ENCODE measurements at regions of chr19 and their contacts with region 1.

Region 1: DNA sequence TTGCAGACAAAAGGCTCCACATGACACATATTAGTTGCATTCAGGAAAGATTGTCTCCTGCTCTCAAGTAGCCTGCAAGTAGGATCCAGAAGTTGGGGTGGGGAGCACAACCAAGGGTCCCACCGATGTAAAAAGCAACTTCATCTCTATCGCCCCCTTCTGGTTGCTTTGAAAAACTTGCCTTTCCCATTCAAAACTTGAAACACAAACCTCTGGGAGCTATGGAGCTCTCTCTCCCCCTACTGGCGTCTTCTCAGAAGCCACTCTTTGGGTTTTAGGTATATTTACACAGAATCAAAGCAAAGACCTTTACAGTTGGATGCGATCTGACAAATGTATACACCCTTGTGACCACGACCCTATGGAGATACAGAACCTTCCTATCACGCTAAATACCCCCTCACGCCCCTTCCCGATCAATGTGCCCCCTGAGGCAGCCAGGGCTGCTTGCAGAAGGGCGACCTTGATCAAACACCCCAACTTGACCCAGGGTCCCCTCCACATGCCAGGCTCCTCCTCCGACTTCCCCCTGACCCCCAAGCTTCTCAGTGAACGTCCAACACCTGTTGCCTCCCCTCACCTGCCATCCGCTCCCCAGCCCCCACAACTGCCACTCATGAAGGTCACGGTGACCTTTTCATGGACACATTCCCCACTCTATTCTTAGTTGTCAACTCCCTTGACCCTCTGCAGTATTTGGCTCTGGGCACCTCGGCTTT is 10.1 kb downstream of the NOSIP start:
- DNase-seq: peak; percentile 81
- H3K4me3 Mint-ChIP-seq: peak overlapping the region; percentile 37
- H3K27ac Mint-ChIP-seq: peak overlapping the region; percentile 85
- H3K4me1 Mint-ChIP-seq: peaks cover 47% of the 10 kb centered on the region
- H3K27me3 Mint-ChIP-seq: no peaks in the 10 kb centered on the region

Region 2: DNA sequence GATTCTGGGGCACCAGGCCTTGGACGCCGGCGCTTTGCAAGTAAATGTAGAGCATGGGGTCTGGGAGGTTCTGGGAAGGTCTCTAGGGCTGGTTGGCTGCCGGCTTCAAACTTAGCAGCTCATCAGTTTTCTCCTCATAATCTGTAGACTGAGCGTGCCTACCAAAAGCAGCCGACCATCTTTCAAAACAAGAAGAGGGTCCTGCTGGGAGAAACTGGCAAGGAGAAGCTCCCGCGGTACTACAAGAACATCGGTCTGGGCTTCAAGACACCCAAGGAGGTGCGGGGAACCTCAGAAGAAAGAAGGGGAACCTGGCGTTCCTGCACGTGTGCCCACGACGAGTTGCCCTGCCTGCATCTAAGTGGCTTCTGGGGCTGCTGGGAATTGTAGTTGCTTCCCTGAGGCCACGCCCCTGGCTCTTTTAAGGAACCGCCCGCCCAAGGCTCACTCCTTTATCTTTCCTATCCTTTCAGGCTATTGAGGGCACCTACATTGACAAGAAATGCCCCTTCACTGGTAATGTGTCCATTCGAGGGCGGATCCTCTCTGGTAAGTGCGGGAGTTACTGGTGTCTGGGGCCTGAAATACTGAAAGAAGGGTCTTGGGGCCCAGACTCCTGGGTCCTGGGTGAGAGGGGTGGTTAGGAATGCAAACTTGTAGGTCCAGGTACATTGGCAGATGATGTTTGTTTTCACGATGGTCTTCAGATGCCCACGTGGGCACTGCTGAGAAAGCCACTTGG is 73.1 kb before region 1 on chr19:
- CTCF ChIA-PET with region 1: interaction called, 202 read pairs
- POLR2A ChIA-PET with region 1: interaction called, 4 read pairs
- intact Hi-C with region 1: no loop called
- DNase-seq: peak; percentile 83
- H3K4me3 Mint-ChIP-seq: peak overlapping the region; percentile 92
- H3K27ac Mint-ChIP-seq: peak overlapping the region; percentile 97
- H3K4me1 Mint-ChIP-seq: peaks cover 49% of the 10 kb centered on the region
- H3K27me3 Mint-ChIP-seq: no peaks in the 10 kb centered on the region

Region 3: GRCh38 chr19:49528211-49528771 is 42.0 kb before region 1 on chr19:
- CTCF ChIA-PET with region 1: interaction called, 30 read pairs
- POLR2A ChIA-PET with region 1: interaction called, 3 read pairs
- intact Hi-C with region 1: no loop called
- DNase-seq: no peak
- H3K4me3 Mint-ChIP-seq: peak overlapping the region; percentile 72
- H3K27ac Mint-ChIP-seq: no peak overlapping the region
- H3K4me1 Mint-ChIP-seq: peaks cover 18% of the 10 kb centered on the region
- H3K27me3 Mint-ChIP-seq: no peaks in the 10 kb centered on the region

Region 4: GRCh38 chr19:49546825-49547565 is 23.3 kb before region 1 on chr19:
- CTCF ChIA-PET with region 1: interaction called, 171 read pairs
- POLR2A ChIA-PET with region 1: interaction called, 5 read pairs
- intact Hi-C with region 1: no loop called
- DNase-seq: peak; percentile 68
- H3K4me3 Mint-ChIP-seq: peak overlapping the region; percentile 75
- H3K27ac Mint-ChIP-seq: peak overlapping the region; percentile 59
- H3K4me1 Mint-ChIP-seq: peaks cover 29% of the 10 kb centered on the region
- H3K27me3 Mint-ChIP-seq: no peaks in the 10 kb centered on the region

Region 5: DNA sequence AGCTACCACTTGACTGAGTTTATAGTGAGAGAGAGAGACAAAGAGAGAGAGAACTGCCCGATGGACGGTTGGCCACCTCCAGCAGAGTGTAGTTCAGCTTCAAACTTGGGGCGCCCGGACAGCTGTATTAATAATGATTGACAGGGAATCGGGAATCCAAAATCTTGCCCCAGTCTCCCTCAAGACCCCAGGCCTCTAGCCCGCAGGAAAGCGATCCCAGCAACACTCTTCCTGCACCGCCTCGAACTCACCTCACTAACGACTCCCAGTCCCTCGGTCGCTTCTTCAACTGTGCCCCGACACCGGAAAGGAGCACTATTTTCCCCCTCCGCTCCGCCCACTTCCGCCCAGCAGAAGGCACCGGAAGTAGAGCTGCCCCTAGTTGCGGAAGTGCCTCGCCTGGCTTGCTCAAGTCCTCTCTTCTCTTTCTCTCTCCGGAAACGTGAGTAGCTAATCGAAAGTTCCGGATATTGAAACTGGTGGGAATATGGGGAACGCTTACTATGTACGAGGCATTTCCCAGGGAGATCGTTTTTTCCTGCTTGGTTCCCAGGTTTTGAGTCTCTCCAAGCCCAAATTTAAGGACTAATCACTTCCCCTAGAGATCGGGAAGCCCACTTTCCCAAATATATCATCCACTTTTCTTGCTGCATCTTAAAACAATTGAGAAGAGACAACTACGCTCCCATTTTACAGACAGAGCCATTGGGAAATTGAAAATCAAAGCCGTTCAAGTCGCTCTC is 10.1 kb after region 1 on chr19 and contains the start of gene NOSIP:
- CTCF ChIA-PET with region 1: interaction called, 36 read pairs
- POLR2A ChIA-PET with region 1: interaction called, 8 read pairs
- intact Hi-C with region 1: no loop called
- DNase-seq: peak; percentile 98
- H3K4me3 Mint-ChIP-seq: peak within 1 kb of the TSS; percentile 97
- H3K27ac Mint-ChIP-seq: peak within 1 kb of the TSS; percentile 92
- H3K4me1 Mint-ChIP-seq: peaks cover 29% of the 10 kb centered on the region
- H3K27me3 Mint-ChIP-seq: no peaks in the 10 kb centered on the region
- total RNA-seq, gene NOSIP: 80.3 to 84.3 TPM

Region 6: DNA sequence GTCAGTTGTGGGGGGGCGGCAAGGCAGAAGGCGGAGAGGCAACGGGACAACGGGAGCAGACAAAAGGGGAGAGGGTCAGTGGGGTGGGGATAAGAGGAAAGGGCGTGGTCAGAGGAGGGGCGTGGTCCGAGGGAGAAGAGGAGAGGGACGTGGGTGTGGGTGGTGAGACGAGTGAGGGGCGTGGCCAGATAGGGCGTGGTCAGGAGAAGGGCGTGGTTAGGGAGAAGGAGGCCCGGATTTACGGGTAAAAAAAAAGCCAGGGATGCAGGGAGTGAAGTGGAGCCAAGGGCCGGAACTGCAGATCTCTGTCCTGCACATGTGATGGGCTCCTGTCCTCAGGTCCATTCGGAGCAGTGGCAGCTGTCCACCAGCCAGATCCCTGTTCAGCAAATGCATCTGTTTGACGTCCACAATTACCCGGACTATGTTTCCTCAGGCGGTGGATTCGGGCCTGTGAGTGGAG is 142.1 kb after region 1 on chr19:
- CTCF ChIA-PET with region 1: no interaction called
- POLR2A ChIA-PET with region 1: no interaction called
- intact Hi-C with region 1: no loop called
- DNase-seq: no peak
- H3K4me3 Mint-ChIP-seq: no peak overlapping the region
- H3K27ac Mint-ChIP-seq: no peak overlapping the region
- H3K4me1 Mint-ChIP-seq: peaks cover 6% of the 10 kb centered on the region
- H3K27me3 Mint-ChIP-seq: no peaks in the 10 kb centered on the region

Region 7: DNA sequence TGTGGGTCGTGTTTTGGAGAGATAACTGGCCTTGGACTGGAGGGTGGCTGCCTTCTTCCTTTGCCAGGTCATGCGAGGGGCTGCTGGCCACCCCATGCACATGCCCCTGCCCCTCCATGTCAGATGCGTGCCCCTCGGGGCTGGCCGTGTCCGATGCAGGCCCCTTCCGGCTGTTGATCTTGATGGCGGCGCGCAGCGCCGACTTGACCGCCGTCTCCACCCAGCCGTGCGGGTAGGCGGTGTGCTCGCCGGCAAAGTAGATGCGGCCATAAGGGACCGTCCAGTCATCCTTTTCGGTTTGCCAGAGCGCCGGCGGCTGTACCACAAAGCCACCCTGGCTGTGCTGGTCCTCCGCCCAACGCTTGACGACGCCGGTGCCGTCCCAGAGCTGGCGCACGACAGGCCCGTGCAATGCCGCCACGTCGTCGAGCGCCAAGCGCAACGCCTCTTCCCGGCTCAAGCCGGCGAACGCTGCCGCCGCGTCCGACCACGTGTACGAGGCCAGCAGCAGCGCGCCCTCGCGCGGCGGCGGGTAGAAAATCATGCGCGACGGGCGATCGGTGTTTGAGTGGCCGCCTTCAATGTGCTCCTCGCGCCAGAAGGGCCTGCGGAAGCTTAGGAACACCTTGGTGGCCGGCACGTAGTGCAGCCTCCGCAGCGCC is 319.5 kb after region 1 on chr19:
- CTCF ChIA-PET with region 1: no interaction called
- POLR2A ChIA-PET with region 1: no interaction called
- intact Hi-C with region 1: no loop called
- DNase-seq: peak; percentile 84
- H3K4me3 Mint-ChIP-seq: peak overlapping the region; percentile 69
- H3K27ac Mint-ChIP-seq: peak overlapping the region; percentile 76
- H3K4me1 Mint-ChIP-seq: peaks cover 46% of the 10 kb centered on the region
- H3K27me3 Mint-ChIP-seq: no peaks in the 10 kb centered on the region

Measured in activated CD4-positive, alpha-beta memory T cell treated with anti-CD3 and anti-CD28 coated beads for 36 hours (primary cell).